Left lung (tissue), 14 donors: ENCODE measurements at regions of chr2 and their contacts with region 1.

Region 1: GRCh38 chr2:38315707-38316333 is 61.3 kb downstream of the ATL2 start:
- DNase-seq: peak in 2 of 4 donors; percentile 28 to 44
- ATAC-seq: peak; percentile 85
- H3K4me3 ChIP-seq: no peak overlapping the region
- H3K27ac ChIP-seq: no peak overlapping the region
- H3K4me1 ChIP-seq: no peaks in the 10 kb centered on the region
- H3K27me3 ChIP-seq: no peaks in the 10 kb centered on the region
- CTCF ChIP-seq: peak; percentile 65 to 69

Region 2: GRCh38 chr2:38214209-38214717 is 101.6 kb before region 1 on chr2:
- intact Hi-C with region 1: no loop called
- DNase-seq: no peak
- ATAC-seq: no peak
- H3K4me3 ChIP-seq: no peak overlapping the region
- H3K27ac ChIP-seq: peak overlapping the region in 1 of 2 donors; percentile 34
- H3K4me1 ChIP-seq: peaks cover 0 to 25% of the 10 kb centered on the region in 2 donors
- H3K27me3 ChIP-seq: peaks cover 0 to 6% of the 10 kb centered on the region in 2 donors
- CTCF ChIP-seq: no peak

Region 3: DNA sequence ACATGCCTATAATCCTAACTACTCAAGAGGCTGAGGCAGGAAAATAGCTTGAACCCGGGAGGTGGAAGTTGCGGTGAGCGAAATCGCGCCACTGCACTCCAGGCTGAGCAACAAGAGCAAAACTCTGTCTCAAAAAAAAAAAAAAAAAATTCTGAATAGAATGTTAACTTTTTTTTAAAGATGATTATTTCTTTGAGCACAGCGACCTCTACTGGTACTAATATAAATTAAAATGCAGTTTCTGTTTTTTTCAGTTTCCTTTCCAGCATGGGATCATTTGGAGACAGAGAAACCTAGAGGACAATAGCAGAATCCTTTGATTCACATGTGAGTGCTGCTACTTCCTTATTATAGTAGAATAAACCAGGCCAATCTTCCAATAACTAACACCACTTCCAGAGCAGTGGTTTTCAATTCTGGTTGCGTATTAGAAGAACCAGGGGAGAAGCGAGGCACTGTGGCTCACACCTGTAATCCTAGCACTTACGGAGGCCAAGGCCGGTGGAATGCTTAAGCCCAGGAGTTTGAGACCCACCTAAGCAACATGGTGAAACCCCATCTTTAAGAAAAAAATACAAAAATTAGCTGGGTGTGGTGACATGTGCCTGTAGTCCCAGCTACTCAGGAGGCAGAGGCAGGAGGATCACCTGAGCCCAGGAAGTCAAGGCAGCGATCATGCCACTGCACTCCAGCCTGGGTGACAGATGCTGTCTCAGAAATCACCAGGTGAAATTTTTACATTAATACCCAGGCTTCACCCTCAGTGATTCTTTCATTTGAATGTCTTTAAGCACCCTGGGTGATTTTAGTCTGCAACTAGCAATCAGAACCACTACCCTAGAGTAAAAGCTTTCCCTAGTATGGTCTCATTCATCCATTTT is 425.3 kb after region 1 on chr2:
- intact Hi-C with region 1: loop called in 1 of 2 experiments (anchors 5 kb)
- DNase-seq: peak in 2 of 4 donors; percentile 40 to 61
- ATAC-seq: peak; percentile 30
- H3K4me3 ChIP-seq: no peak overlapping the region
- H3K27ac ChIP-seq: no peak overlapping the region
- H3K4me1 ChIP-seq: peaks cover 3 to 60% of the 10 kb centered on the region in 2 donors
- H3K27me3 ChIP-seq: no peaks in the 10 kb centered on the region
- CTCF ChIP-seq: peak; percentile 60 to 64